ENCODE measurements at regions of chr7 and their contacts with region 1.

Region 1: GRCh38 chr7:152675759-152676636 is at the start of gene XRCC2:
- DNase-seq: peak; percentile 97
- H3K4me3 ChIP-seq: peak within 1 kb of the TSS; percentile 74 to 98 (median 82)
- H3K27ac ChIP-seq: peak within 1 kb of the TSS; percentile 84 to 93 (median 90)
- H3K4me1 ChIP-seq: peaks cover 6 to 19% (median 11%) of the 10 kb centered on the region in 6 donors
- H3K27me3 ChIP-seq: no peaks in the 10 kb centered on the region
- CTCF ChIP-seq: peak in 2 of 11 experiments; percentile 28 to 30
- POLR2A ChIP-seq: peak in 2 of 3 donors; percentile 32 to 86
- total RNA-seq, gene XRCC2: 0.70 to 5.0 (median 1.6) TPM

Region 2: DNA sequence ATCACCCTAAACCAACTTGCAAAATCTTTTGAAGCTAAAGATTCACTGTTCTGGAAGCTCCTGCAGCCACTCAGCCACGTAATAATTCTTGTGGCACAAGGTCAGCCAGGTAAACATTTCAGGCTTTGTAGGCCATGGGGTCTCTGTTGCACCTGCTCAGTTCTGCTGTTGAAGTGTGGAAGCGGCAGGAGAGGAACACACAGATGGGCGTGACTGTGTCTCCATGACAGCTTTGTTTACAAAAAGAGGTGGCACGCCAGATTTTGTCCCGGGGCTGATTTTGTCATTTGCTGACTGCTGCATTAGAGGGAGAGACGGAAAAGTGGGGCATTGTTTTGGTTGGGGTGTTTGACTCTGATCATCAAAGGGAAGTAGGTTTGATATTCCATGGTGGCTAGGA is 902.2 kb before region 1 on chr7:
- intact Hi-C with region 1: no loop called
- DNase-seq: peak; percentile 35
- H3K4me3 ChIP-seq: no peak overlapping the region
- H3K27ac ChIP-seq: no peak overlapping the region
- H3K4me1 ChIP-seq: peaks cover 0 to 17% (median 7%) of the 10 kb centered on the region in 6 donors
- H3K27me3 ChIP-seq: no peaks in the 10 kb centered on the region
- CTCF ChIP-seq: no peak
- POLR2A ChIP-seq: no peak

Region 3: DNA sequence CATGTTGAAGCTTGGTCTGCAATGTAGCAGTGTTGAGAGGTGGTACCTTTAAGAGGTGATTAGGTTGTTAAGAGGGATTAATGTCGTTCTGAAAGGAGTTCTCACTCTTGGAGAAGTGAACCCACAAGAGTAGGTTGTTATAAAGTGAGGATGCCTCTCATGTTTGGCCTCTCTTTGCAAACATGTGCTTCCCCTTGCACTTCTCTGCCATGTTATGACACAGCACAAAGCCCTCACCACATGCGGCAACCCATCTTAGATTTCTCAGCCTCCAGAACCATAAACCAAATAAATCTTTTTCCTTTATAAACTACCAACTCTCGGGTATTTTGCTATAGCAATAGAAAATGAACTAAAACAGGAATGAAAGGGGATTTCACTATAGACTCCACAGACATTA is 306.5 kb before region 1 on chr7:
- intact Hi-C with region 1: no loop called
- DNase-seq: no peak
- H3K4me3 ChIP-seq: no peak overlapping the region
- H3K27ac ChIP-seq: no peak overlapping the region
- H3K4me1 ChIP-seq: peaks cover 0 to 74% (median 16%) of the 10 kb centered on the region in 6 donors
- H3K27me3 ChIP-seq: no peaks in the 10 kb centered on the region
- CTCF ChIP-seq: no peak
- POLR2A ChIP-seq: no peak

Region 4: GRCh38 chr7:152463709-152464311 is 212.2 kb before region 1 on chr7:
- intact Hi-C with region 1: loop called (anchors 10 kb)
- DNase-seq: peak; percentile 100
- H3K4me3 ChIP-seq: peak overlapping the region; percentile 60 to 87 (median 74)
- H3K27ac ChIP-seq: peak overlapping the region; percentile 99 to 100 (median 100)
- H3K4me1 ChIP-seq: peaks cover 4 to 44% (median 30%) of the 10 kb centered on the region in 6 donors
- H3K27me3 ChIP-seq: no peaks in the 10 kb centered on the region
- CTCF ChIP-seq: peak in 3 of 11 experiments; percentile 12 to 32 (median 20)
- POLR2A ChIP-seq: peak in 2 of 3 donors; percentile 74 to 90

Region 5: GRCh38 chr7:152597512-152597911 is 78.5 kb before region 1 on chr7:
- intact Hi-C with region 1: no loop called
- DNase-seq: peak; percentile 39
- H3K4me3 ChIP-seq: no peak overlapping the region
- H3K27ac ChIP-seq: no peak overlapping the region
- H3K4me1 ChIP-seq: no peaks in the 10 kb centered on the region
- H3K27me3 ChIP-seq: no peaks in the 10 kb centered on the region
- CTCF ChIP-seq: no peak
- POLR2A ChIP-seq: no peak

Region 6: GRCh38 chr7:152735443-152736004 is 59.5 kb after region 1 on chr7:
- intact Hi-C with region 1: no loop called
- DNase-seq: no peak
- H3K4me3 ChIP-seq: no peak overlapping the region
- H3K27ac ChIP-seq: no peak overlapping the region
- H3K4me1 ChIP-seq: peaks cover 0 to 5% (median 0%) of the 10 kb centered on the region in 6 donors
- H3K27me3 ChIP-seq: no peaks in the 10 kb centered on the region
- CTCF ChIP-seq: no peak
- POLR2A ChIP-seq: no peak